CD14-positive monocyte (primary cell): ENCODE measurements at regions of chr17 and their contacts with region 1.

Region 1: DNA sequence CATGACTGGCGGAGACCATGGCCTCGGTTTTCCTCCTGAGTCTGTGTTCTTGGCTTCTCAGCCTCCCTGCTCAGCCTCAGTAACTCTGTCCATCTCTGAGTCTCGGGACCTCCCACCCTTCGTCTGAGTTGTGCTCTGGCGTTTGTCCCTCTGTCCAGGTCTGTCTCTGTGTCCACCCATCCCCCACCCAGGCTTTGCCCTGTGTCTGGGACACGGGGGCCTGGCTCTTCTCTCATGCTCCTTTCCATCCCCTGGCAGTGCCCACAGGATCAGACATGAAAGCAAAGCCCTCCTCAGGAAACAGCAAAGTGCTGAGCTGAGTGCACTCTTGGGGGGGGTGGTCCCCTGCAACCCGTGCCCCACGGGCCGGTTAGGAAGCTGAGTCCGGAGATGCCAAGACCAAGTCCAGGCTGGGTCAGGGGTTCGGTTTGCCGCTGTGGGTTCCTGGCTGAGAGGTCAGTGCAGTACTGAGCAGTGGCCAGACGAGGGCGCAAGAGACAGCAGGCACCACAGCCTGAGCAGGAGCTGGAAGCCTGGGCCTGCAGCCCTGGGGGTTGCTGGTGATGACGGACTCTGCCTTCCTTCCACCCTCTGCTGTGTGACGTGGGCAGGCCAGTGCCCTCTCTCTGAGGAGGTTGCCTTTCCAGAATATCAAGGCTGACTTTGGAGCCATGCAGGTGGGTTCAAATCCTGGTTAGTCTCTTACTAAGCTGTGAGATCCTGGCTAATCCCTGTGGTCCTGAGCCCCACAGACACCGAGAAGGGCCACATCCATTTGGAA is 2.5 kb downstream of the P2RX1 start:
- DNase-seq: peak; percentile 88 to 90 (median 89)
- H3K4me3 ChIP-seq: peak overlapping the region; percentile 75 to 92 (median 77)
- H3K4me3 Mint-ChIP-seq: peak overlapping the region; percentile 96 to 97
- H3K27ac ChIP-seq: peak overlapping the region; percentile 80 to 96
- H3K27ac Mint-ChIP-seq: peak overlapping the region; percentile 94 to 99 (median 98)
- H3K4me1 ChIP-seq: peaks cover 72 to 73% of the 10 kb centered on the region in 2 donors
- H3K4me1 Mint-ChIP-seq: peaks cover 72% of the 10 kb centered on the region
- H3K27me3 ChIP-seq: no peaks in the 10 kb centered on the region
- H3K27me3 Mint-ChIP-seq: peaks cover 0 to 3% (median 0%) of the 10 kb centered on the region in 3 donors
- CTCF ChIP-seq: peak; percentile 98

Region 2: GRCh38 chr17:3865176-3865575 is 48.5 kb before region 1 on chr17:
- intact Hi-C with region 1: loop called (anchors 5 to 10 kb)
- DNase-seq: no peak
- H3K4me3 ChIP-seq: no peak overlapping the region
- H3K4me3 Mint-ChIP-seq: no peak overlapping the region
- H3K27ac ChIP-seq: no peak overlapping the region
- H3K27ac Mint-ChIP-seq: peak overlapping the region in 2 of 7 donors; percentile 25 to 65
- H3K4me1 ChIP-seq: no peaks in the 10 kb centered on the region
- H3K4me1 Mint-ChIP-seq: no peaks in the 10 kb centered on the region
- H3K27me3 ChIP-seq: no peaks in the 10 kb centered on the region
- H3K27me3 Mint-ChIP-seq: peaks cover 0 to 3% (median 0%) of the 10 kb centered on the region in 3 donors
- CTCF ChIP-seq: no peak

Region 3: GRCh38 chr17:3893003-3893719 is 20.6 kb before region 1 on chr17 and contains the start of gene CAMKK1:
- intact Hi-C with region 1: loop called in 1 of 2 experiments (anchors 2 kb)
- DNase-seq: peak; percentile 80 to 87 (median 82)
- H3K4me3 ChIP-seq: peak within 1 kb of the TSS; percentile 39 to 79 (median 60)
- H3K4me3 Mint-ChIP-seq: peak within 1 kb of the TSS; percentile 85 to 90
- H3K27ac ChIP-seq: peak within 1 kb of the TSS; percentile 28 to 75
- H3K27ac Mint-ChIP-seq: peak within 1 kb of the TSS; percentile 69 to 92 (median 89)
- H3K4me1 ChIP-seq: peaks cover 59 to 78% of the 10 kb centered on the region in 2 donors
- H3K4me1 Mint-ChIP-seq: peaks cover 53% of the 10 kb centered on the region
- H3K27me3 ChIP-seq: no peaks in the 10 kb centered on the region
- H3K27me3 Mint-ChIP-seq: peaks cover 10 to 16% (median 11%) of the 10 kb centered on the region in 3 donors
- CTCF ChIP-seq: no peak
- polyA plus RNA-seq, gene CAMKK1: 0.74 to 24.1 (median 1.5) TPM

Region 4: GRCh38 chr17:3965118-3965803 is 51.5 kb after region 1 on chr17:
- intact Hi-C with region 1: loop called (anchors 2 to 5 kb)
- DNase-seq: peak; percentile 59 to 76 (median 68)
- H3K4me3 ChIP-seq: peak overlapping the region; percentile 56 to 86 (median 65)
- H3K4me3 Mint-ChIP-seq: peak overlapping the region; percentile 77 to 95
- H3K27ac ChIP-seq: peak overlapping the region; percentile 48 to 82
- H3K27ac Mint-ChIP-seq: peak overlapping the region; percentile 84 to 93 (median 91)
- H3K4me1 ChIP-seq: peaks cover 44 to 52% of the 10 kb centered on the region in 2 donors
- H3K4me1 Mint-ChIP-seq: peaks cover 42% of the 10 kb centered on the region
- H3K27me3 ChIP-seq: no peaks in the 10 kb centered on the region
- H3K27me3 Mint-ChIP-seq: peaks cover 2 to 8% (median 2%) of the 10 kb centered on the region in 3 donors
- CTCF ChIP-seq: no peak

Region 5: GRCh38 chr17:3993493-3994220 is 79.9 kb after region 1 on chr17:
- intact Hi-C with region 1: no loop called
- DNase-seq: no peak
- H3K4me3 ChIP-seq: no peak overlapping the region
- H3K4me3 Mint-ChIP-seq: no peak overlapping the region
- H3K27ac ChIP-seq: no peak overlapping the region
- H3K27ac Mint-ChIP-seq: no peak overlapping the region
- H3K4me1 ChIP-seq: no peaks in the 10 kb centered on the region
- H3K4me1 Mint-ChIP-seq: peaks cover 4% of the 10 kb centered on the region
- H3K27me3 ChIP-seq: no peaks in the 10 kb centered on the region
- H3K27me3 Mint-ChIP-seq: peaks cover 2 to 5% (median 2%) of the 10 kb centered on the region in 3 donors
- CTCF ChIP-seq: no peak